WTC11 (cell line): ENCODE measurements at regions of chr15 and their contacts with region 1.

Region 1: DNA sequence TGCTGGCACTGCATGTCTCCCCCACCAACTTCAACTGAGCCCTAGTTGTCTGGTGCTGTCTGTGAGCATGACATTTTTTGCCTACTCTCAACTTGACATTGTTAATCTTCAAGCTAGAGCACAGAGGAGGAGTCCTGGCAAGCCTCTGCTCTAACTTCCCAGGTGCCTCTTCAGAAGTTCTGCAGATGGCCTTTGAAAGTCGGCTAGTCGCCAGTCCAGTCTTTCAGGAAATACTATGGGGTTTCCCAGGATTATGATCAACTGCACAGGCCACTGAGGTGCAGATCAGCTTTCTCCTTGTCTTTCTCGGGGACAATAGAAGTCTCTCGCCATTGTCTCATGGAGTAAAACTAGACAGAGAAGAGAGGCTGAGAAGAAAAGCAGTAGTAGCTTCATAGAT is 86.7 kb downstream of the ST8SIA2 start:
- DNase-seq: no peak
- ATAC-seq: no peak
- H3K4me3 Mint-ChIP-seq: no peak overlapping the region
- H3K27ac Mint-ChIP-seq: no peak overlapping the region
- H3K4me1 Mint-ChIP-seq: peaks cover 16% of the 10 kb centered on the region
- H3K27me3 Mint-ChIP-seq: no peaks in the 10 kb centered on the region; the same call in 1 of the 2 replicates
- CTCF ChIP-seq: no peak

Region 2: GRCh38 chr15:92226014-92226612 is 254.3 kb before region 1 on chr15:
- CTCF ChIA-PET with region 1: no interaction called
- POLR2A ChIA-PET with region 1: no interaction called
- DNase-seq: peak; percentile 17
- ATAC-seq: peak; percentile 97
- H3K4me3 Mint-ChIP-seq: no peak overlapping the region
- H3K27ac Mint-ChIP-seq: no peak overlapping the region
- H3K4me1 Mint-ChIP-seq: no peaks in the 10 kb centered on the region; the same call in 1 of the 2 replicates
- H3K27me3 Mint-ChIP-seq: no peaks in the 10 kb centered on the region
- CTCF ChIP-seq: peak; percentile 31; the same call in 1 of the 2 replicates

Region 3: DNA sequence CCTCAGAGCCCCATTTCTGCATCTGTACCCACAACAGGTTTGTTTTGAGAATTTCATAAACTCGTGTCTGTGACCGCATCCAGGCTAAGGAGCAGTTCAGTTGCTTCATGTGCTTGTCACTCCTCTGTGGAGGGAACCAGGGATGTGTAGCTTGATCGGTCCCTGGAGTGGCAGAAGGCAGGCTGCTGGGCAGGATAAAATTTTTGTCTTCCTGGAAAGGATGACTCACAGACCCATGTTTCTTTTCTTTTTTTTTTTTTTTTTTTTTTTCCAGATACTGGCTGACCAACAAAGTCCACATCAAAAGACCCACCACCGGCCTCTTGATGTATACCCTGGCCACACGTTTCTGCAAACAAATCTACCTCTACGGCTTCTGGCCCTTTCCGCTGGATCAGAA is 16.6 kb before region 1 on chr15:
- CTCF ChIA-PET with region 1: no interaction called
- POLR2A ChIA-PET with region 1: interaction called, 11 read pairs
- DNase-seq: no peak
- ATAC-seq: no peak
- H3K4me3 Mint-ChIP-seq: no peak overlapping the region
- H3K27ac Mint-ChIP-seq: no peak overlapping the region
- H3K4me1 Mint-ChIP-seq: no peaks in the 10 kb centered on the region
- H3K27me3 Mint-ChIP-seq: no peaks in the 10 kb centered on the region; the same call in 1 of the 2 replicates
- CTCF ChIP-seq: no peak

Region 4: DNA sequence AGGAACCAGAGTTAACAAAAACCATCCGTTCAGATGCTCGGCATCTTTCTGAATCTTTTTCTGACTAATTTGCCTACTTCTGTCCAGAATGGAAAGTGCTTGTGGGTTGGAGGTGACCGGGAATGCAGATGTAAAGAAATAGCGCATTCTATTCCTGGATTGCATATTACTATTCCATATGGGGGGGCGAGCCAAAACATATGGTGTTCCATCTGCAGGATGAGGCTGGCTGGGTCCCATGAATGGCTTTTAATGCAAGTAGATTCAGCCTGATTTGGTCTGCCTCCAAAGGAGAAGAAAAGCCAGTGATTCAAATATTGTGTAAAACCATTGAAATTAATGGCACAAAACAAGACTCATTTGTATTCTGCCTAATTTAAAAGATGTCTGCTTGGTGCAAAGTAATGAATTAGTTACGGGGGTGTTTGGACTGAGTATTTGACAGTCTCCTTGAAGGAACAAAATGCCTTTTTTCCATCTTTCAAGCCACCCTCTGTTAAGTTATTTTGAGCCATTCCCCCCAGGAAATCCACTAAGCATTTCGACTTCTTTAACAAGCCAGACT is 12.3 kb after region 1 on chr15:
- CTCF ChIA-PET with region 1: no interaction called
- POLR2A ChIA-PET with region 1: no interaction called
- DNase-seq: no peak
- ATAC-seq: no peak
- H3K4me3 Mint-ChIP-seq: no peak overlapping the region
- H3K27ac Mint-ChIP-seq: no peak overlapping the region
- H3K4me1 Mint-ChIP-seq: no peaks in the 10 kb centered on the region
- H3K27me3 Mint-ChIP-seq: peaks cover 4% of the 10 kb centered on the region
- CTCF ChIP-seq: no peak